ENCODE measurements at regions of chr5 and their contacts with region 1.

Region 1: GRCh38 chr5:134758504-134759341 is at the start of gene DDX46:
- DNase-seq: peak; percentile 97
- ATAC-seq: peak; percentile 98
- H3K4me3 Mint-ChIP-seq: peak within 1 kb of the TSS; percentile 100
- H3K27ac Mint-ChIP-seq: peak within 1 kb of the TSS; percentile 98
- H3K4me1 Mint-ChIP-seq: peaks cover 21% of the 10 kb centered on the region
- H3K27me3 Mint-ChIP-seq: peaks cover 14% of the 10 kb centered on the region
- CTCF ChIP-seq: peak; percentile 19; the same call in 1 of the 2 replicates
- total RNA-seq, gene DDX46: 91.4 to 123 TPM (median 93.1 TPM) in 3 replicates

Region 2: GRCh38 chr5:134568761-134569695 is 189.7 kb before region 1 on chr5:
- CTCF ChIA-PET with region 1: no interaction called
- POLR2A ChIA-PET with region 1: no interaction called
- DNase-seq: no peak
- ATAC-seq: no peak
- H3K4me3 Mint-ChIP-seq: no peak overlapping the region
- H3K27ac Mint-ChIP-seq: no peak overlapping the region
- H3K4me1 Mint-ChIP-seq: 0 out of 2 replicates have a peak, but pooled peaks cover 2% of the 10 kb centered on the region
- H3K27me3 Mint-ChIP-seq: no peaks in the 10 kb centered on the region
- CTCF ChIP-seq: no peak

Region 3: DNA sequence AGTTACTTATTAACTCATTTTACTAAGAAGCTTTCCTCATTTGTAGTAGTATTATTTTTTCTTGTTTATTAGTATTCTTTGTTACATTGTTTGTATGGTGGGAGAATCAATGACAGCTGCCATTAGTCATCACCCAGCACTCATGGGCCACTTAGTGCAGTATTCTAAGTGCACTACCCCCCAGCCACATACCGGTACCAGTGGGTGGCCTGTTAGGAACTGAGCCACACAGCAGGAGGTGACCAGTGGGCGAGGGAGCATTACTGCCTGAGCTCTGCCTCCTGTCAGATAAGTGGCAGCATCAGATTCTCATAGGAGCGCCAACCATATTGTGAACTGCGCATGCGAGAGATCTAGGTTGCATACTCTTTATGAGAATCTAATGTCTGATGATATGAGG is 44.6 kb before region 1 on chr5:
- CTCF ChIA-PET with region 1: no interaction called
- POLR2A ChIA-PET with region 1: no interaction called
- DNase-seq: no peak
- ATAC-seq: no peak
- H3K4me3 Mint-ChIP-seq: no peak overlapping the region
- H3K27ac Mint-ChIP-seq: no peak overlapping the region; the same call in 1 of the 2 replicates
- H3K4me1 Mint-ChIP-seq: no peaks in the 10 kb centered on the region
- H3K27me3 Mint-ChIP-seq: no peaks in the 10 kb centered on the region
- CTCF ChIP-seq: no peak

Region 4: DNA sequence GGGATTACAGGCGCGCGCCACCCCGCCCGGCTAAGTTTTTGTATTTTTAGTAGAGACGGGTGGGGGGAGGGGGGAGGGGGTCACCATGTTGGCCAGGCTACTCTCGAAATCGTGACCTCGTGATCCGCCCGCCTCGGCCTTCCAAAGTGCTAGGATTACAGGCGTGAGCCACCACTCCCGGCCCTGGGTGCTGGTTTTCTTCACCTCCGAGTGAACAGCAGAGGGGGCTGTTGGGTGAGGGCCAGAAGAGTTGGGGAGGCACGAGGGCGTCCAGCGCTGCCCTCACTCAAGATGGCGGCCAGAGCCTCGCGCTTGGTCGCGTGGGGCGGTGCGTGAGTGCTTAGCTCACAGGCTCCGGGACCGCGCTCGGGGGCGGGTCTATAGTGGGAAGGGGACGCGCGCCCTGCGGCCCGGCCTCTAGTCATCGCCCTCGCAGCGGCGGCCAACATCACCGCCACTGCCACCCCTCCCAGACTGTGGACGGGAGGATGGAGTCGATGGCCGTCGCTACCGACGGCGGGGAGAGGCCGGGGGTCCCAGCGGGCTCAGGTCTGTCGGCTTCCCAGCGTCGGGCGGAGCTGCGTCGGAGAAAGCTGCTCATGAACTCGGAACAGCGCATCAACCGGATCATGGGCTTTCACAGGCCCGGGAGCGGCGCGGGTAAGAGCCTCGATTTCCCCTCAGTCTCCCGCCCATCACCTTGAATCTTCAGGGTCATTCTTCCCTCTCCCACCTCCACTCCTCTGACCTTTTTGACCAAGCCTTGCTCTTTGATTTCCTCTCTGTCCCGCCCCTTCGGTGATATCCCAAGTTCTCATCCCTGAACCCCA is 20.4 kb before region 1 on chr5 and contains the start of gene CAMLG:
- CTCF ChIA-PET with region 1: interaction called, 27 read pairs
- POLR2A ChIA-PET with region 1: interaction called, 12 read pairs
- DNase-seq: peak; percentile 98
- ATAC-seq: peak; percentile 87
- H3K4me3 Mint-ChIP-seq: peak within 1 kb of the TSS; percentile 95
- H3K27ac Mint-ChIP-seq: peak within 1 kb of the TSS; percentile 95
- H3K4me1 Mint-ChIP-seq: peaks cover 8% of the 10 kb centered on the region
- H3K27me3 Mint-ChIP-seq: no peaks in the 10 kb centered on the region
- CTCF ChIP-seq: peak; percentile 43; the same call in 1 of the 2 replicates
- total RNA-seq, gene CAMLG: 39.7 to 43.9 TPM (median 42.1 TPM) in 3 replicates

Region 5: GRCh38 chr5:135013947-135014570 is 255.3 kb after region 1 on chr5:
- CTCF ChIA-PET with region 1: no interaction called
- POLR2A ChIA-PET with region 1: no interaction called
- DNase-seq: no peak
- ATAC-seq: no peak
- H3K4me3 Mint-ChIP-seq: no peak overlapping the region
- H3K27ac Mint-ChIP-seq: no peak overlapping the region
- H3K4me1 Mint-ChIP-seq: peaks cover 5% of the 10 kb centered on the region
- H3K27me3 Mint-ChIP-seq: no peaks in the 10 kb centered on the region; the same call in 1 of the 2 replicates
- CTCF ChIP-seq: no peak

Measured in WTC11 (cell line).